Thyroid gland (tissue), 4 donors: ENCODE measurements at regions of chr19 and their contacts with region 1.

Region 1: DNA sequence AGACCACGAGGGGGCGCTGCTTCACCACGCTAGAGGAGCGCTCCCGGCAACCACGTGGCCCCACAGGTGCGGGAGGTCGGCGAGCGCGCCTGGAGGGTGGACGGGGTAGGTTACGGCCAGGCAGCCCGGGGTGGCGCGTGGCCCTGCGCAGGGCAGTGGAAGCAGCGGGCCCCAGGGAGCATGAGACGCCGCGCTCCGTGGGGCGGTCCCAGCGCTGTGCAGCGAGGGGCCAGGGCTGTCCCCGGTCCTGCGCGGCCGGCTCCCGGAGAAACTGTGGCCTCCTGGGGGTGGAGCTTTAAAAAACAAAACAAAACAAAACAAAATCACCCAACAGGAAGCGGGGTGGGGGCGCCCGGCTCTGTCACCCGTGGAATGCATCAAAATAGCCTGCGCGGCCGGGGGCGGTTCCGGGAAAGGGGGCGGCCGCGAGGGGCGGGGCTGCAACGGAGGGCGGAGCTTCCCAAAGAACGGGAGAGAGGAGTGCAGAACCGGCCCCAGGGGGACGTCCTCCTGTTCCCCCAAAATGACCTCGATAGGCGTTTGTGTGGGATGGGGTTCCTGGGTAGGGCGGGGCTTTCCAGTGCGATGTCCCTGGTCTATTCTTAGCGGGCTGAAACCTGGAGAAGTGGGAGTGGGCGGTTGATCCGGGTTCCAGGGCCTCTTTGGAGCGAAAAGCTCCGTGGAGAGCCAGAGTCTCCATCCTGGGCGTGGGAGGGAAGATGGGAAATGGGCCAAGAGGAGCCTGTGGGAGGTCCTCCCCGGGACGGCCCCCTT is 27.3 kb downstream of the NUMBL start:
- DNase-seq: peak; percentile 92 to 94
- H3K4me3 ChIP-seq: peak overlapping the region in 1 of 3 donors; percentile 52
- H3K27ac ChIP-seq: peak overlapping the region; percentile 46 to 67 (median 60)
- H3K4me1 ChIP-seq: peaks cover 4 to 8% of the 10 kb centered on the region in 2 donors
- H3K27me3 ChIP-seq: no peaks in the 10 kb centered on the region
- CTCF ChIP-seq: peak; percentile 90 to 99 (median 98)
- POLR2A ChIP-seq: peak in 1 of 2 donors; percentile 18

Region 2: GRCh38 chr19:40815223-40815814 is 152.2 kb after region 1 on chr19:
- intact Hi-C with region 1: loop called (anchors 5 kb)
- DNase-seq: no peak
- H3K4me3 ChIP-seq: no peak overlapping the region
- H3K27ac ChIP-seq: no peak overlapping the region
- H3K4me1 ChIP-seq: peaks cover 26 to 48% of the 10 kb centered on the region in 2 donors
- H3K27me3 ChIP-seq: no peaks in the 10 kb centered on the region
- CTCF ChIP-seq: no peak
- POLR2A ChIP-seq: no peak